ENCODE measurements at regions of chr15 and their contacts with region 1.

Region 1: GRCh38 chr15:26634319-26634718 is 138.5 kb downstream of the GABRB3 start:
- DNase-seq: no peak
- ATAC-seq: no peak

Region 2: DNA sequence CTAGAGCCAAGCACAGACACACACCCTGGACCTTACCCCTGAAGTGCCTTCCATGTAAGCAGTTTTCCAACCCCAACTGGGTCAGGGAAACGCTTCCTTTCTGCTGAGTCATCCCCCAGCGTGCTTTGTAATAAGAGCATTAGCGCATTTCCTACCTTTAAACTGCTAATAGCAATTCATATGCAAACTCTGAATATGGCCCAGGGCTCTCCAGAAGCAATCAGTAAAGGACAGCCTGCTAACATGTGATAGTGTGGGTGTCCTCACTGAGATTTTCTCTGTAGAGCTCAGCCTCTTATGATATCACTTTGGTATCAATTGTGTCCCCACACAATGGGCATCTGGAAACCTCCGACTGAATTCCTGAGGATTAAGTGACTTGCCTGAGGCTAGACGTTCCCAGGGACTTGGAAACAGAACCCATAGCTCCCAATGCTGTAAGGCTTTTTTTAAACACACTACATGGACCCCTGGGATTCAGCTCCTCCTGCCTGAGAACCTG is 132.9 kb after region 1 on chr15:
- intact Hi-C with region 1: loop called in 1 of 2 experiments (anchors 10 kb)
- DNase-seq: no peak
- ATAC-seq: peak; percentile 14 to 64

Measured in left cardiac atrium (tissue), 4 donors.